Activated B cell treated with CpG ODN at 0.5 μM for 24 hours (primary cell): ENCODE measurements at regions of chr3 and their contacts with region 1.

Region 1: DNA sequence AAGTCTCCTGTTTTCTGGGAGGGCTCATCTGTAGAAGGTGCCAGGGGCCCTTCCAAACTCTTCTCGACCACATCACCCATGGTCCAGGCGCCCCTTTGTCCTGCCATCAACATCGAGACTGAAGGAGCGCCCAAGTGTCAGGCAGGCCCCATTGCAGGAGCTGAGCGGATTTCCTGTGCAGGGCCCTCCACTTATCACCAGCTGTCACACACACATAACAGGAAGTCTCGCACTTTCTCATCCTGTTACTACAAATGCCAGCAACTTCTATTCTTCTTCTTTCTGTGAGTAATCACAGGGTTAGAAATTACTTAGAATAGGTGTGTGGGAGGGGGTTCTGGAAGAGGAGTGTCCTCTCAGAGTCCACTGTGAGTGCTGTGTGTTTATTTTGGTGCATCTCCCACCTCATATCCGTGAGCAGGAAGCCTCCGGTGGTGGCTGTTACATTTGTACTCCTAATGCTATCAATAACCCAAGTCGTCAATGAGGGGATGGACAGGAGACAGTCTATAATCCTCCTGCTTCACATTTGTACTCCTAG is at the start of gene KLHL6:
- DNase-seq: peak; percentile 51
- ATAC-seq: peak; percentile 81
- H3K4me3 Mint-ChIP-seq: peak within 1 kb of the TSS; percentile 98
- H3K27ac Mint-ChIP-seq: peak within 1 kb of the TSS; percentile 99
- H3K4me1 Mint-ChIP-seq: peaks cover 54% of the 10 kb centered on the region
- H3K27me3 Mint-ChIP-seq: no peaks in the 10 kb centered on the region
- CTCF ChIP-seq: no peak
- total RNA-seq, gene KLHL6: 34.6 and 41.7 TPM in 2 replicates

Region 2: DNA sequence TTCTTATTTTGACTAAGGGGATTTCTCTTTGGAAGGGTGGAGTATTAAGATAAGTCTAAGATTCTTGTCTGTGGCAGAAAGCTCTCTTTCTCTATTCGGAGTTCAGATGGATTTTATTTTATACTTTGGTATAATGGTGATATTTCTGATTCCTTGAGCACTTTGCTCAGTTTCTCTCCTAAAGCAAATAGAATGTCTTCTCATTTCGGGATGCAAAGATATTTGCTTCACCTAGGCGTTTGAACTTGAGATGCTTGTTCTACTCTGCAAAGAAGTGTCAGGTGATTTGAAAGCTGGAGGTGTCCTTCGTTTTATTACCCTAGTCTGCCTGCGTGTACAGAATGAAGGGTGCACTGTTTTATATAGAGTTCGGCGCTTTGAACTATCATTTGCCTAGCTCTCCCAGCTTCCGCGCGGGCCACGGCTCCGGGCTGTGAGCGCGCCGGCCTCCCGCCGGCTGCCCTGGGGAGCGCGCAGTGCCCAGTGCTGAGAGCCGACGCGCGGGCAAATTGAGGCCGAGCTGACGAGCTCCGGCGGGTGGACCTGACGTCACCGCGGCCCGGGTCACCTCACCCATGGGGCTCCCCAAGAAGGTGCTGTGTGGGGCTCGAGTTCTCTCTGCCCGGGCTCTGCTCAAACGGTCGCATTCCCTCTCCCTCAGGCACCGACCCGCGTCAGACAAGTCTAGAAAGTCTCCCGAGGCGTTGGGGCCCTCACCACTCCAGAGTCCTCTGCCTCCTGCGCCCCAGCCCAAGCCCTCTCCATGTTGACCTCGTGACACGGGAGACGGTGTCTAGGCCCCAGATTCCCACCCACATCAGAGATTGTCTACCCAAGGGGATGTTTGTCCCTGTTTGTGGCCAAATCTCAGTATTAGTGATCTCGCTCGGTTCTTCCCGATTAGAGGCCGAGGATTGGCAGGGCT is 1836.4 kb before region 1 on chr3:
- CTCF ChIA-PET with region 1: no interaction called
- POLR2A ChIA-PET with region 1: no interaction called
- intact Hi-C with region 1: no loop called
- DNase-seq: no peak
- ATAC-seq: no peak
- H3K4me3 Mint-ChIP-seq: no peak overlapping the region
- H3K27ac Mint-ChIP-seq: no peak overlapping the region
- H3K4me1 Mint-ChIP-seq: no peaks in the 10 kb centered on the region
- H3K27me3 Mint-ChIP-seq: peaks cover 87% of the 10 kb centered on the region
- CTCF ChIP-seq: no peak

Region 3: GRCh38 chr3:183468424-183468823 is 87.2 kb before region 1 on chr3:
- CTCF ChIA-PET with region 1: interaction called, 19 read pairs
- POLR2A ChIA-PET with region 1: interaction called, 5 read pairs
- intact Hi-C with region 1: loop called (anchors 1 kb)
- DNase-seq: no peak
- ATAC-seq: no peak
- H3K4me3 Mint-ChIP-seq: no peak overlapping the region
- H3K27ac Mint-ChIP-seq: no peak overlapping the region
- H3K4me1 Mint-ChIP-seq: peaks cover 10% of the 10 kb centered on the region
- H3K27me3 Mint-ChIP-seq: peaks cover 2% of the 10 kb centered on the region
- CTCF ChIP-seq: no peak

Region 4: GRCh38 chr3:183527428-183528379 is 27.9 kb before region 1 on chr3:
- CTCF ChIA-PET with region 1: interaction called, 7 read pairs
- POLR2A ChIA-PET with region 1: interaction called, 10 read pairs
- intact Hi-C with region 1: loop called (anchors 2 kb)
- DNase-seq: no peak
- ATAC-seq: peak; percentile 83
- H3K4me3 Mint-ChIP-seq: peak overlapping the region; percentile 73
- H3K27ac Mint-ChIP-seq: peak overlapping the region; percentile 87
- H3K4me1 Mint-ChIP-seq: peaks cover 77% of the 10 kb centered on the region
- H3K27me3 Mint-ChIP-seq: no peaks in the 10 kb centered on the region
- CTCF ChIP-seq: no peak

Region 5: GRCh38 chr3:183576487-183577107 is 21.0 kb after region 1 on chr3:
- CTCF ChIA-PET with region 1: interaction called, 3 read pairs
- POLR2A ChIA-PET with region 1: interaction called, 3 read pairs
- intact Hi-C with region 1: loop called (anchors 2 kb)
- DNase-seq: no peak
- ATAC-seq: peak; percentile 47
- H3K4me3 Mint-ChIP-seq: peak overlapping the region; percentile 20
- H3K27ac Mint-ChIP-seq: no peak overlapping the region
- H3K4me1 Mint-ChIP-seq: peaks cover 54% of the 10 kb centered on the region
- H3K27me3 Mint-ChIP-seq: peaks cover 11% of the 10 kb centered on the region
- CTCF ChIP-seq: no peak

Region 6: DNA sequence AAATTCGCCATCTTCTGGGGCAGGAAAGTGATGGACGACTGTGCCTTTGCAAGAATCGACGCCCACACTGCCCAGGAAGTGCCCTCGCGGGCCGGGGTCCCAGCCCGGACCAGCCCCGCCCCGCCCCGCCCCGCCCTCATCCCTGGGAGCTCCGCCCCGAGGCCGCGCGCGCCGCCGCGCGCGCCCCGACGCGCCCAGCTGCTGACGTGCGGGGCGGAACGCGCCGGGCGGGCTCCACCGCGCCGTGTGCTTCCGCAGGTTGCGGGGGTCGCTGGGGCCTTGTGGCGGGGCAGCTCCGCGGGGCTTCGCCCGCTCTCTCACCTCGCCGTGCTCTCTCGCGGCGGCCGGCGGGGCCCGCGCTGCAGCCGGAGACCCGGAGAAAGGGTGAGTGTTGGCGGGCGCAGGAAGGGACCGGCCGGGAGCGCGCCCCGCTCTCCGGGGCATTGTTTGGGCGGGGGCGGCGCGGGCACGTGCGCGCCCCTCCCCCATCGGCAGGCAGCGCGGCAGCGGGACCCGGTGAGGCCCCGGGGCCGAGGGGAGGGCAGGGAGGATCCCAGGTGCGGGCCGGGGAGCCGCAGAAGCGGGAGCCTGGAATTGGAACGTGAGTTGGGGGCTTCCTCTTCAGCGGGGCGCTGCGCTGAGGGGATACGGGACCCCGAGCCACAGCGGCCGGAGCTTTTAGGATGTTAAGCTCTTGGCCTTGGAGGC is 142.2 kb after region 1 on chr3 and contains the start of gene YEATS2:
- CTCF ChIA-PET with region 1: no interaction called
- POLR2A ChIA-PET with region 1: no interaction called
- intact Hi-C with region 1: loop called (anchors 1 kb)
- DNase-seq: peak; percentile 77
- ATAC-seq: peak; percentile 89
- H3K4me3 Mint-ChIP-seq: peak within 1 kb of the TSS; percentile 91
- H3K27ac Mint-ChIP-seq: peak within 1 kb of the TSS; percentile 86
- H3K4me1 Mint-ChIP-seq: peaks cover 32% of the 10 kb centered on the region
- H3K27me3 Mint-ChIP-seq: no peaks in the 10 kb centered on the region
- CTCF ChIP-seq: no peak
- total RNA-seq, gene YEATS2: 24.0 and 26.2 TPM in 2 replicates